ENCODE measurements at regions of chr19 and their contacts with region 1.

Region 1: DNA sequence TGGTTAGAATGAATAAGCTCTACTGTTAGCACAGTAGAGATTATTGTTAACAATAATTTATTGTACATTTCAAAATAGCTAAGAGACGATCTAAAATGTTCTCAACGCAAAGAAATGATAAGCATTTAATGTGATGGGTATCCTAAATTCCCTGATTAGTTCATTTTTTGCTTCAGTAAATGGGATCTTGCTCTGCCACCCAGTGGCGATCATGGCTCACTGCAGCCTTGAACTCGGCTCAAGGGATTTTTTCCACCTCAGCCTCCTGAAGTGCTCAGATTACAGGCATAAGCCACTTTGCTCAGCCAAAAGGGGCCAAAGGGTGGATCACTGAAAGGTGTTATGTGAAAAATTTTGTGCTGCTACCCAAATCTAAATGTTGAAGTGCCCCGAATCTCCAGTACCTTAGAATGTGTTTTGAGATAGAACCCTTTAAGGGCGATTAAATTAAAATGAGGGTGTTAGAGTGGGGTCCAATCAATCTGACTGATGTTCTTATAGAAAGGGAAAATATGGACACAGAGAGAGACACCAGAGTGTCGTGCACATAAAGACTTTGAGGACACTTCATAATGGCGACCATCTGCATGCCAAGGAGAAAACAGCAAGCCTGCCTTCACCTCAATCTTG is 31.5 kb upstream of the ZNF766 start:
- DNase-seq: peak; percentile 12 to 75 (median 53)
- ATAC-seq: peak; percentile 88
- H3K4me3 ChIP-seq: no peak overlapping the region
- H3K4me3 Mint-ChIP-seq: no peak overlapping the region
- H3K27ac ChIP-seq: no peak overlapping the region
- H3K27ac Mint-ChIP-seq: no peak overlapping the region
- H3K4me1 ChIP-seq: no peaks in the 10 kb centered on the region
- H3K4me1 Mint-ChIP-seq: no peaks in the 10 kb centered on the region
- H3K27me3 ChIP-seq: no peaks in the 10 kb centered on the region
- H3K27me3 Mint-ChIP-seq: no peaks in the 10 kb centered on the region
- CTCF ChIP-seq: peak; percentile 99

Region 2: GRCh38 chr19:51777570-51778462 is 460.1 kb before region 1 on chr19:
- CTCF ChIA-PET with region 1: interaction called, 5 read pairs
- POLR2A ChIA-PET with region 1: no interaction called
- intact Hi-C with region 1: loop called (anchors 10 kb)
- DNase-seq: peak in 8 of 9 experiments; percentile 10 to 73 (median 32)
- ATAC-seq: no peak
- H3K4me3 ChIP-seq: no peak overlapping the region
- H3K4me3 Mint-ChIP-seq: no peak overlapping the region
- H3K27ac ChIP-seq: no peak overlapping the region
- H3K27ac Mint-ChIP-seq: no peak overlapping the region
- H3K4me1 ChIP-seq: no peaks in the 10 kb centered on the region
- H3K4me1 Mint-ChIP-seq: peaks cover 5% of the 10 kb centered on the region
- H3K27me3 ChIP-seq: peaks cover 0 to 3% of the 10 kb centered on the region in 2 experiments
- H3K27me3 Mint-ChIP-seq: peaks cover 63% of the 10 kb centered on the region
- CTCF ChIP-seq: peak; percentile 69

Region 3: DNA sequence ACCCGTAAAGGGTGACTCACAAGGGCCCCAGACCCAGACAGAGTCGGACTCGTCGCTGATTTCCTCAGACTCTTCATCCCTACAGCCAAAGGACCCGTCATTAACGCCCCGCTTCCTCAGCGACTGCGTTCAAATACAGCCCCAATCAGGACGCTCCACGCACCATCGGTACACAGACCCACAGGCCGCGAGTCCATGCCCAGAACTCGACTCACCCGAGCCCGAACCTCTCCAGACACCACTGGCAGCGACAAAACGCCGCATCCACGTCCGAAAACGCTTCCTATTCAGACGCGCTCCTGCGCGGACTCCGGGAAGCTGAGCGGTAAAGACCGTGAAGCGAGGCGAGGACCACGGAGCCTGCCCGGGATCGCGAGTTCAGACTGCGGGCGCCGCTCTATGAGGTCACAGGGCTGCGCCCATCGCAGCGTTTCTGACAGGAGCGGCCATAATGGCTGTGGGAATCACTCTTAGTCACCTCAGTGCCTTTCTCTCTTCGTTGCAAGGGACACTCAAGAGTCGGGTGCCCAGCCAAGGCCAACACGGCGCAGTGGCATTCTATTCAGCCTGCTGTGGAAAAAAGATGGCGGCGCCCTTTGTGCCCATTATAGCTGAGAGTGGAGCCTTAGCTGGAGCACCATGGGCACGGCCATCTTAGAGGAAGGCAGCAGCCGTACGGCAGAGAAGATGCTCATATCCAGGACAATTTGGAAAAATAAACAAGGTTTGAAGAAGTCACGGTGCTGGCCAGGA is 209.7 kb before region 1 on chr19 and contains the start of gene ZNF614:
- CTCF ChIA-PET with region 1: no interaction called
- POLR2A ChIA-PET with region 1: no interaction called
- intact Hi-C with region 1: loop called in 1 of 2 experiments (anchors 2 kb)
- DNase-seq: peak; percentile 74 to 92 (median 85)
- ATAC-seq: peak; percentile 86
- H3K4me3 ChIP-seq: peak within 1 kb of the TSS; percentile 92 to 93
- H3K4me3 Mint-ChIP-seq: peak within 1 kb of the TSS; percentile 98
- H3K27ac ChIP-seq: peak within 1 kb of the TSS; percentile 93 to 94
- H3K27ac Mint-ChIP-seq: peak within 1 kb of the TSS; percentile 99
- H3K4me1 ChIP-seq: peaks cover 10% of the 10 kb centered on the region
- H3K4me1 Mint-ChIP-seq: peaks cover 30% of the 10 kb centered on the region
- H3K27me3 ChIP-seq: no peaks in the 10 kb centered on the region
- H3K27me3 Mint-ChIP-seq: no peaks in the 10 kb centered on the region
- CTCF ChIP-seq: no peak
- total RNA-seq, gene ZNF614: 10.6 to 11.4 TPM

Region 4: GRCh38 chr19:52095172-52096014 is 142.5 kb before region 1 on chr19 and contains the start of gene ZNF841:
- CTCF ChIA-PET with region 1: interaction called, 3 read pairs
- POLR2A ChIA-PET with region 1: no interaction called
- intact Hi-C with region 1: loop called in 1 of 2 experiments (anchors 1 kb)
- DNase-seq: peak; percentile 70 to 89 (median 83)
- ATAC-seq: peak; percentile 97
- H3K4me3 ChIP-seq: peak within 1 kb of the TSS; percentile 96 to 99
- H3K4me3 Mint-ChIP-seq: peak within 1 kb of the TSS; percentile 97
- H3K27ac ChIP-seq: peak within 1 kb of the TSS; percentile 86 to 87
- H3K27ac Mint-ChIP-seq: peak within 1 kb of the TSS; percentile 93
- H3K4me1 ChIP-seq: peaks cover 16% of the 10 kb centered on the region
- H3K4me1 Mint-ChIP-seq: peaks cover 41% of the 10 kb centered on the region
- H3K27me3 ChIP-seq: no peaks in the 10 kb centered on the region
- H3K27me3 Mint-ChIP-seq: no peaks in the 10 kb centered on the region
- CTCF ChIP-seq: no peak
- total RNA-seq, gene ZNF841: 18.9 to 19.9 TPM

Region 5: DNA sequence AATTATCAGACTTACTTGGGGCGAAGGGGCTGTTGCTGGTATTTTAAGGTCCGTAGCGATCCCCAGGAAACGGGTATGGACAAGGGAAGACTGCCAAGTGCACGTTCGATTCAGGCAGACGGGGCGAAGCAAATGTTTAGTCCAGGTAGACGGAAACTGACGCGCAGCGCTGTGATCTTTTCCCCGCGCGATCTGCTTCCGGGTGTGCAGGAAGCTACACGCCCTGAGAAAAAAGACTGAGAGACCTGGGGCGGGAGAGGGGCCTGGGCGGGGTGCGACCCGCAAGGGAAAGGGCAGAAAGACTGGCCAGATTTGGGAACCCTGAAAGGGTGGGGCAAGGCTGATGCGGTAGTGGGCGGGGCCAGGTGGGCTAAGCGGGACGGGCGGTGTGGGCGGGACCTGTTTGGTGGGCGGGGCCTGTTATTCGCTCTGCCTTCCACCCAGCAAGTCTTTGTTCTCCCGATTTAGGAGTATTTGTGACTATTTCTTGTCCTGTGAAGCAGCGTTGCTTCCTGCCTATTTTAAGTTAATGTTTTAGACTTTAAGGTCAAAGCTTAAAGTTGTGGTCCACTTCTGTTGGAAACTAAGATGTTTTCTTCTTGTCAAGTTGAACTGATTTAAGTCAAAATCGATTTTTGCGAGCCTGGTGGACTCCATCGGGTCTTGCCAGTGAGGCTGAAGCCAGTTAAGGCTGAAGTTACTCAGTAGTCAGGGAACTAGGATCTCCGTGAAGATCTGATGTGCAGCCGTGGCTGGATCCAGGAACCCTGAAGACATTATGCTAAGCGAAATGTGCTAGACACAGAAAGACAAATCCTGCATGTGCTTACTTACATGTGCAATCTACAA is 66.3 kb before region 1 on chr19 and contains the start of gene ZNF836:
- CTCF ChIA-PET with region 1: interaction called, 7 read pairs
- POLR2A ChIA-PET with region 1: no interaction called
- intact Hi-C with region 1: loop called in 1 of 2 experiments (anchors 1 kb)
- DNase-seq: peak; percentile 79 to 95 (median 92)
- ATAC-seq: peak; percentile 92
- H3K4me3 ChIP-seq: peak within 1 kb of the TSS; percentile 83 to 96
- H3K4me3 Mint-ChIP-seq: peak within 1 kb of the TSS; percentile 94
- H3K27ac ChIP-seq: peak within 1 kb of the TSS; percentile 72 to 96
- H3K27ac Mint-ChIP-seq: peak within 1 kb of the TSS; percentile 95
- H3K4me1 ChIP-seq: peaks cover 24% of the 10 kb centered on the region
- H3K4me1 Mint-ChIP-seq: peaks cover 41% of the 10 kb centered on the region
- H3K27me3 ChIP-seq: no peaks in the 10 kb centered on the region
- H3K27me3 Mint-ChIP-seq: no peaks in the 10 kb centered on the region
- CTCF ChIP-seq: no peak
- total RNA-seq, gene ZNF836: 17.6 to 22.1 TPM

Region 6: GRCh38 chr19:52227196-52227940 is 10.5 kb before region 1 on chr19:
- CTCF ChIA-PET with region 1: interaction called, 11 read pairs
- POLR2A ChIA-PET with region 1: interaction called, 3 read pairs
- intact Hi-C with region 1: no loop called
- DNase-seq: no peak
- ATAC-seq: no peak
- H3K4me3 ChIP-seq: no peak overlapping the region
- H3K4me3 Mint-ChIP-seq: no peak overlapping the region
- H3K27ac ChIP-seq: peak overlapping the region in 1 of 2 experiments; percentile 14
- H3K27ac Mint-ChIP-seq: peak overlapping the region; percentile 38
- H3K4me1 ChIP-seq: no peaks in the 10 kb centered on the region
- H3K4me1 Mint-ChIP-seq: no peaks in the 10 kb centered on the region
- H3K27me3 ChIP-seq: no peaks in the 10 kb centered on the region
- H3K27me3 Mint-ChIP-seq: no peaks in the 10 kb centered on the region
- CTCF ChIP-seq: no peak

Region 7: GRCh38 chr19:52248241-52248640 is 10.4 kb after region 1 on chr19:
- CTCF ChIA-PET with region 1: interaction called, 13 read pairs
- POLR2A ChIA-PET with region 1: no interaction called
- intact Hi-C with region 1: no loop called
- DNase-seq: peak; percentile 39 to 74 (median 67)
- ATAC-seq: peak; percentile 70
- H3K4me3 ChIP-seq: no peak overlapping the region
- H3K4me3 Mint-ChIP-seq: no peak overlapping the region
- H3K27ac ChIP-seq: no peak overlapping the region
- H3K27ac Mint-ChIP-seq: no peak overlapping the region
- H3K4me1 ChIP-seq: no peaks in the 10 kb centered on the region
- H3K4me1 Mint-ChIP-seq: no peaks in the 10 kb centered on the region
- H3K27me3 ChIP-seq: no peaks in the 10 kb centered on the region
- H3K27me3 Mint-ChIP-seq: no peaks in the 10 kb centered on the region
- CTCF ChIP-seq: peak; percentile 45

Region 8: GRCh38 chr19:52428937-52429336 is 191.1 kb after region 1 on chr19 and contains the start of gene ZNF534:
- CTCF ChIA-PET with region 1: no interaction called
- POLR2A ChIA-PET with region 1: no interaction called
- intact Hi-C with region 1: no loop called
- DNase-seq: no peak
- ATAC-seq: no peak
- H3K4me3 ChIP-seq: no peak within 1 kb of the TSS
- H3K4me3 Mint-ChIP-seq: no peak within 1 kb of the TSS
- H3K27ac ChIP-seq: no peak within 1 kb of the TSS
- H3K27ac Mint-ChIP-seq: no peak within 1 kb of the TSS
- H3K4me1 ChIP-seq: no peaks in the 10 kb centered on the region
- H3K4me1 Mint-ChIP-seq: no peaks in the 10 kb centered on the region
- H3K27me3 ChIP-seq: no peaks in the 10 kb centered on the region
- H3K27me3 Mint-ChIP-seq: no peaks in the 10 kb centered on the region
- CTCF ChIP-seq: no peak
- total RNA-seq, gene ZNF534: not detected